ENCODE measurements at regions of chr4 and their contacts with region 1.

Region 1: GRCh38 chr4:148441986-148442831 is at the start of gene NR3C2:
- DNase-seq: peak; percentile 98
- H3K4me3 Mint-ChIP-seq: peak within 1 kb of the TSS; percentile 90
- H3K27ac Mint-ChIP-seq: peak within 1 kb of the TSS; percentile 83
- H3K4me1 Mint-ChIP-seq: peaks cover 15% of the 10 kb centered on the region
- H3K27me3 Mint-ChIP-seq: peaks cover 33% of the 10 kb centered on the region
- total RNA-seq, gene NR3C2: 4.1 to 5.0 TPM

Region 2: GRCh38 chr4:148056869-148057268 is 385.3 kb before region 1 on chr4:
- CTCF ChIA-PET with region 1: no interaction called
- POLR2A ChIA-PET with region 1: interaction called, 40 read pairs
- DNase-seq: peak; percentile 85
- H3K4me3 Mint-ChIP-seq: no peak overlapping the region
- H3K27ac Mint-ChIP-seq: peak overlapping the region; percentile 68
- H3K4me1 Mint-ChIP-seq: peaks cover 90% of the 10 kb centered on the region
- H3K27me3 Mint-ChIP-seq: no peaks in the 10 kb centered on the region

Region 3: GRCh38 chr4:148346657-148347056 is 95.6 kb before region 1 on chr4:
- CTCF ChIA-PET with region 1: no interaction called
- POLR2A ChIA-PET with region 1: no interaction called
- DNase-seq: no peak
- H3K4me3 Mint-ChIP-seq: no peak overlapping the region
- H3K27ac Mint-ChIP-seq: no peak overlapping the region
- H3K4me1 Mint-ChIP-seq: peaks cover 8% of the 10 kb centered on the region
- H3K27me3 Mint-ChIP-seq: no peaks in the 10 kb centered on the region